Activated B cell treated with CpG ODN at 0.5 μM for 24 hours (primary cell): ENCODE measurements at regions of chr15 and their contacts with region 1.

Region 1: DNA sequence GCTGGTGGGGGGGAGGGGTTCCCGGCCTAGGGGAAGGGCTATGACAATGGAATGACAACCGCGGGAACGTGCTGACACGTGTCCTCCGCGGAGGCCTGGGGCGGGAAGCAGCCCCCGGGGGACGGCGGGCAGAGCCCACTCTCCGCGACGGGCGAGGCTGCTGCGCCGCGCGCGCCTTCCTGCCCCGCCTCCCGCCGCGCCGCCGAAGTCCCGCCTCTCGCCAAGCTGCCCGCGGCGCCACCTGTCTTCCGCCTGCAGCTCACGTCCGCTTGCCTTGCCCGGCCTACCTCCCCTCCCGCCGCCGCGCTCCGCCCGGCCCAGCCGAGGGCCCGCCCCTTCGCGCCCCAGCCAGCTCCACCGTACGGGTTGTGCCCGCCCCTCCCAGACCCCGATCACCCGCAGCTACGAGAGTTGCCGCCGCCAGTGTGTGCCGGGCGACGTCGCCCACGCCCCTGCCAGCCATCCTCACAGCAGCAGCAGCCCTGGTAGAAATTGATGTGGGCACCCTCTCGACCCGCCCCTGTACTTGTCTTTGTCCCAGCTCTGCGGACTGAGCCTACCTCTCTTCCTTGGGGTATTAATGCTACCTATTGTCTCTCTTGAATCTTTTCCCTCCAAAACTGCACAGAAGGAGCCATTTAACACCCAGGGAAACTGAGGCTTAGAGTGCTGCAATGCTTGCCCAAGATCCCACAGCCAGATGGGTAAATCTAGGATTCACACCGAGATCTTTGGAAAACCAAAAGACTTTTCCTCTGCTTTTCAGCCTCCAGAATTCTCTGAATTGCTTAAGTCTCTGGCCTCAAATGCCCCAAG is at the start of gene PARP16:
- DNase-seq: peak; percentile 94
- ATAC-seq: peak; percentile 96
- H3K4me3 Mint-ChIP-seq: peak within 1 kb of the TSS; percentile 85
- H3K27ac Mint-ChIP-seq: peak within 1 kb of the TSS; percentile 90
- H3K4me1 Mint-ChIP-seq: peaks cover 27% of the 10 kb centered on the region
- H3K27me3 Mint-ChIP-seq: no peaks in the 10 kb centered on the region
- CTCF ChIP-seq: no peak
- total RNA-seq, gene PARP16: 11.2 and 11.5 TPM in 2 replicates

Region 2: GRCh38 chr15:65249641-65250040 is 37.3 kb before region 1 on chr15:
- CTCF ChIA-PET with region 1: no interaction called
- POLR2A ChIA-PET with region 1: interaction called, 15 read pairs
- intact Hi-C with region 1: no loop called
- DNase-seq: no peak
- ATAC-seq: peak; percentile 45
- H3K4me3 Mint-ChIP-seq: no peak overlapping the region
- H3K27ac Mint-ChIP-seq: no peak overlapping the region
- H3K4me1 Mint-ChIP-seq: peaks cover 2% of the 10 kb centered on the region
- H3K27me3 Mint-ChIP-seq: no peaks in the 10 kb centered on the region
- CTCF ChIP-seq: no peak

Region 3: DNA sequence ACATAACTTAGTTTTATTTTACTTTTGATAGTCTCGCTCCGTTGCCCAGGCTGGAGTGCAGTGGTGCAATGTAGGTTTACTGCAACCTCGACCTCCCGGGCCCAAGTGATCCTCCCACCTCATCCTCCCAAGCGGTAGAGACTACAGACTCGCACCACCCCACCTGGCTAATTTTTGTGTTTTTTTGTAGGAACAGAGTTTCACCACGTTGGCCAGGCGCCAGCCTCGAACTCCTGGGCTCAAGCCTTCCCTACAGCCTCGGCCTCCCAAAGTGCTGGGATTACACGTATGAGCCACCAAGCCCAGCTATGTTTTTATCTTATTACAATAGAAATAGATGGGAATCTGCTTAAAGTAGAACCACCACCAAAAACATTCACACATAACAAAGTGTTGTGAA is 11.8 kb after region 1 on chr15:
- CTCF ChIA-PET with region 1: interaction called, 9 read pairs
- POLR2A ChIA-PET with region 1: interaction called, 186 read pairs
- intact Hi-C with region 1: loop called (anchors 1 kb)
- DNase-seq: no peak
- ATAC-seq: no peak
- H3K4me3 Mint-ChIP-seq: no peak overlapping the region
- H3K27ac Mint-ChIP-seq: no peak overlapping the region
- H3K4me1 Mint-ChIP-seq: peaks cover 49% of the 10 kb centered on the region
- H3K27me3 Mint-ChIP-seq: no peaks in the 10 kb centered on the region
- CTCF ChIP-seq: no peak